ENCODE measurements at regions of chr13 and their contacts with region 1.

Region 1: DNA sequence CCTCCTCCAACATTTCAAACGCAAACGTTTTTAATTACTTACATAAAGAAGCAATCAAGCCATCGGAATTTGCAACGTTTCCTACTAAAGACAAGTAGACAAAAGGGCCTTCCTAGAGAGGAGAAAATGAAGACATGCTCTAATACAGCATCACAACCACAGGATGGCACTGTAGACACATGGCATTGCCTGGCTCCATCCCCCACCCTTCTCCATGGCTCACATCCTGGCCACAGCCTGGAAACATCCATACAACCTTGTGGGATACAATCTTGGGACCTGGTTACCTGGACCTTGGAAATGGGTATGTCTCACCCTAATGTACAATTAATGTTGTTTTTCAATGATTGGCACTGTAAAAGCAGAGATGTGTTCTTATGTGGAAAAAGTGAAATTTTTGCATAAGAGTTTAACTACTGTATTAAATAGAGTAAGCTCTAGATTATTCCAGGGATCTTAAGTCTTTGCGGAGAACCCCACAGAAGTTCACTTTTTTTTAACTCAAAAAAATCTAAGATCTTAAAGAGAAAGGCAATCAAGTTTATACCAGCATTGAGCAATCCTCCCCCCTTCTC is 21.5 kb downstream of the EBPL start:
- DNase-seq: peak; percentile 61
- H3K4me3 ChIP-seq: no peak overlapping the region
- H3K27ac ChIP-seq: no peak overlapping the region
- H3K4me1 ChIP-seq: no peaks in the 10 kb centered on the region
- H3K27me3 ChIP-seq: no peaks in the 10 kb centered on the region
- CTCF ChIP-seq: peak; percentile 66 to 80

Region 2: DNA sequence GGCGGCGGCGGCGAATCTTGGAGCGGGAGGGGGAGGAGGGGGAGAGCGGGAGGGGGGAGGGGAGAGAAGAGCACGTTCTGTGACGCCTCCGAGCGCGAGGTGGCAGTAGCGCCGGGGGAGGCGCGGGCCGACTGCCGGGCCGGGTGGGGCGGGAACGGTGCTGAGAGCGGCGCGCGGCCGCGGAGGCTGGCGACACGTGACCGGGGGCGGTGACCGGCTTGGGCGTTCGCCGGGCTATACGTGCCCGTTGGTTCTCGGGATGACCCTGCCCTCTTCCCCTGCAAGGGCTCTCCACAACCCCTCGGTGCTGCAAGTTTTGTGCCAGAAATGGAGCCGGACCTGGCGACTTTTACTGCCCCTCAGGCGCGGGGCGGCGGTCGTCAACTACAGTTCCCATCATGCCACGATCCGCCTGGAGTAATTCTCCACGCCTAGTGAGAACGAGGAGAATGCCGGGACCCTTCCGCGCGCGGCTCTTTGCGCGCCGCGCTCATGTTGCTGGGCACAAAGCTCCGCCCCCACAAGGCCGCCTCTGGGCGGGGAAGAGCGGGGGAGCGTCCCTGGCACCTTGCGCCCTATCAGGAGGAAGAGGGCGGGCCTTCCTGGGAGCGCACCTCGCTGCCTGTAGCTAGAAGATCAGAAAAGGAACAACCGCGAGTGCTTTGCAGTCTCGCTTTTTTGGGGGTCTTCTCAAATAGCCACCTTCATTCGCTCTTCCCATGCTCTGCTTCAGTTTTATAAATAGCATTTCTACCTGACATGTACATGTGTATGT is 122.9 kb after region 1 on chr13 and contains the start of gene KPNA3:
- CTCF ChIA-PET with region 1: no interaction called
- dilution Hi-C with region 1: no loop called
- in situ Hi-C with region 1: no loop called
- intact Hi-C with region 1: loop called (anchors 1 kb)
- DNase-seq: peak; percentile 95
- H3K4me3 ChIP-seq: peak within 1 kb of the TSS; percentile 62 to 79 (median 70)
- H3K27ac ChIP-seq: peak within 1 kb of the TSS; percentile 86
- H3K4me1 ChIP-seq: peaks cover 10% of the 10 kb centered on the region
- H3K27me3 ChIP-seq: no peaks in the 10 kb centered on the region
- CTCF ChIP-seq: no peak
- total RNA-seq, gene KPNA3: 35.5 to 37.7 TPM

Region 3: DNA sequence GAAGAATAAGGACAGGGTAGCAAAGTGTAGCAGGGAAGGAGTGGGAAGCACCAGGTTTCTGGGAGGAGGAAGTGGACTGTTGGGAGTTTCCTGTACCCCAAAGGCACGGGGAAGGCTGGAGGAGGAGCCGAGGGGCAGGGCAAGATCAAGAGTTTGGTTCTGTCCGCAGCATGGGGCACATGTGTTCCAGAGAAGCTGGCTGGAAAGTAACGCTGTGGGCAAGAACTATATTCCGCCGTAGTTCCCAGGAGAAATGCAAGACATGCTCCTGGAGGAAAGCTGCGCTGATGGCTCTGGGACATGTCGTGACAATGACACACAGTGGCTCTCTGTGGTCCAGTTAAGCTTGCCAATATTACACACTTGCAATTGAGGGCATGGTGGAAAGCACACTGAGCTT is 174.4 kb after region 1 on chr13:
- CTCF ChIA-PET with region 1: no interaction called
- dilution Hi-C with region 1: no loop called
- in situ Hi-C with region 1: loop called in 1 of 2 experiments (anchors 10 kb)
- intact Hi-C with region 1: loop called (anchors 1 kb)
- DNase-seq: no peak
- H3K4me3 ChIP-seq: no peak overlapping the region
- H3K27ac ChIP-seq: no peak overlapping the region
- H3K4me1 ChIP-seq: no peaks in the 10 kb centered on the region
- H3K27me3 ChIP-seq: no peaks in the 10 kb centered on the region
- CTCF ChIP-seq: no peak

Region 4: DNA sequence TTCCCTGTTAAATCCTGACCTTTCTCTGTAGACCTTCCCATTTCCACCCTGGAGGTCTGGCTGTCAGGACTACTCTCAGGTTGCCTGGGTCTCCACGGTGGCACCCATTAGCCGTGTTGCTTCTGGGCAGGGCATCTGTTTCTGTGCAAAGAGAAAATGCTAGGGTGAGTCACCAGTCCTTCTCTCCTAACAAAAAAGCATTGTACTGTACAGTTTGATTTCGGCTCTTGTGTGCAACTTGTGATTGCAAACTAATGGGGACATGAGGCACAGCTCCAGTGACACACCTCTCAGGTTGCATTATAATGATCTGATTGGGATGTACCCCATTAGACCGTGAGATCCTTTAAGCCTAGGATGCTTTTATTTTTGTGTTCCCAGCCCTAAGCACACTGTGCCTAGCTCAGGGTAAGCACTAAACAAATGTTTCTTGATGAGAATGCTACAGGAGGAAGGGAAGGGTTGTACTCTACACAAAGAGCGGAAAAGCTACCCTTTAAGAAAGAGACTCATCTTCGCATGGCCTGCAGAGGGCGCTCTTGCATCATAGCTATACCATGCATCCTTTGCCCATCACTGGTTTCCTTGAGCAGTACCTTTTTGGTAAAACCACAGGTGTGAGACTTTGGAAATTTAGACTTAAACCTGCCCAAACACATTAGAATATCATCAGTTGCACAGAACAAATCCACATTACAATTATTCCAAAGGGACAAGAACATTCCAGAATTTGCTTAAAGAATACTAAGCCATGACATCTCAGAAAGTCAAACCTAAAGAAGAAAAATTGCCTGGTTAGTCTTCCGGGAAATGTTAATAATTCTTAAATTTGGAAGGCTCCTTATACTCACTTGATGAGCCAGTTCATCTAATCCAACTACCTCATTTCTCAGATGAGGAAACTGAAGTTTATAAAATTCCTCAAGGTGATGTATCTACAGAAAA is 306.8 kb after region 1 on chr13:
- CTCF ChIA-PET with region 1: no interaction called
- dilution Hi-C with region 1: no loop called
- in situ Hi-C with region 1: no loop called
- intact Hi-C with region 1: loop called (anchors 1 kb)
- DNase-seq: peak; percentile 69
- H3K4me3 ChIP-seq: no peak overlapping the region
- H3K27ac ChIP-seq: peak overlapping the region; percentile 25
- H3K4me1 ChIP-seq: peaks cover 11% of the 10 kb centered on the region
- H3K27me3 ChIP-seq: no peaks in the 10 kb centered on the region
- CTCF ChIP-seq: peak; percentile 92 to 95

Region 5: GRCh38 chr13:50529154-50529882 is 859.5 kb after region 1 on chr13:
- CTCF ChIA-PET with region 1: no interaction called
- dilution Hi-C with region 1: no loop called
- in situ Hi-C with region 1: no loop called
- intact Hi-C with region 1: loop called (anchors 5 kb)
- DNase-seq: peak; percentile 86
- H3K4me3 ChIP-seq: no peak overlapping the region
- H3K27ac ChIP-seq: peak overlapping the region; percentile 54
- H3K4me1 ChIP-seq: peaks cover 18% of the 10 kb centered on the region
- H3K27me3 ChIP-seq: no peaks in the 10 kb centered on the region
- CTCF ChIP-seq: no peak

Region 6: DNA sequence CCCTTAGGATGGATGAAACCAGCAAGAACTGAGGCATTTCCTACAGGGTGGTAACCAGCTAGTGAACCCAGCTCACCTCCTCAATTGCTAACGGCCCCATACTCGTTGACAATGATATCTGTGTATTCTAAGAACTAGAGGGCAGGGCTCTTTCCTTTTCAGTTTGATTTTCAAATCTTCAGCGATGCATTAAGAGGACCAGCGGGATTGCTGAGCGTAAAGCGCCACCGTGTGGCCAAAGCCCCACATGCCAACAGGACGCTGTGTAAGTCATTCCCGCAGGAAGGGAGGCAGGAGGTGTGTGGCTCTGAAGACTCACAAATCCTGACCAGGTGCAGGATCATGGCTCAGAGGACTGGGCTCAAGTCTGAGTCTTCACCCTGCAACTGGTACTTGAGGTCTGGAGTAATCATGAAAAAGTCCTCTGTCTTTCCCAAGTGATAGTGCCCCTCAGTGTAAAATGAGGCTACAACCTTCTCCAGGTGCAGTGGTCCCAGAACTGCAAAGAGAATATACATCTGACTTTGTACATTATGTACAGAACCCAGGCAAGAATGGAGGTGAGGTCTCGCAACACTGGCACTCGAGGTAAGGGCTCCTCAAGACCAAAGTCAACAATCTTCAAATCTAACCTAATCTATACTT is 1400.3 kb after region 1 on chr13:
- CTCF ChIA-PET with region 1: no interaction called
- dilution Hi-C with region 1: no loop called
- in situ Hi-C with region 1: loop called in 1 of 2 experiments (anchors 25 kb)
- intact Hi-C with region 1: loop called (anchors 5 kb)
- DNase-seq: peak; percentile 64
- H3K4me3 ChIP-seq: no peak overlapping the region
- H3K27ac ChIP-seq: no peak overlapping the region
- H3K4me1 ChIP-seq: peaks cover 19% of the 10 kb centered on the region
- H3K27me3 ChIP-seq: peaks cover 2% of the 10 kb centered on the region
- CTCF ChIP-seq: peak; percentile 97 to 98